ENCODE measurements at regions of chr1 and their contacts with region 1.

Region 1: GRCh38 chr1:234978397-234979295 is 150.0 kb downstream of the TOMM20 start:
- H3K4me3 Mint-ChIP-seq: peak overlapping the region; percentile 87
- H3K27ac Mint-ChIP-seq: peak overlapping the region; percentile 98
- H3K4me1 Mint-ChIP-seq: peaks cover 89% of the 10 kb centered on the region
- H3K27me3 Mint-ChIP-seq: no peaks in the 10 kb centered on the region

Region 2: GRCh38 chr1:234610348-234611152 is 368.1 kb before region 1 on chr1:
- intact Hi-C with region 1: loop called (anchors 1 kb)
- H3K4me3 Mint-ChIP-seq: peak overlapping the region; percentile 76
- H3K27ac Mint-ChIP-seq: peak overlapping the region; percentile 100
- H3K4me1 Mint-ChIP-seq: peaks cover 38% of the 10 kb centered on the region
- H3K27me3 Mint-ChIP-seq: no peaks in the 10 kb centered on the region

Region 3: DNA sequence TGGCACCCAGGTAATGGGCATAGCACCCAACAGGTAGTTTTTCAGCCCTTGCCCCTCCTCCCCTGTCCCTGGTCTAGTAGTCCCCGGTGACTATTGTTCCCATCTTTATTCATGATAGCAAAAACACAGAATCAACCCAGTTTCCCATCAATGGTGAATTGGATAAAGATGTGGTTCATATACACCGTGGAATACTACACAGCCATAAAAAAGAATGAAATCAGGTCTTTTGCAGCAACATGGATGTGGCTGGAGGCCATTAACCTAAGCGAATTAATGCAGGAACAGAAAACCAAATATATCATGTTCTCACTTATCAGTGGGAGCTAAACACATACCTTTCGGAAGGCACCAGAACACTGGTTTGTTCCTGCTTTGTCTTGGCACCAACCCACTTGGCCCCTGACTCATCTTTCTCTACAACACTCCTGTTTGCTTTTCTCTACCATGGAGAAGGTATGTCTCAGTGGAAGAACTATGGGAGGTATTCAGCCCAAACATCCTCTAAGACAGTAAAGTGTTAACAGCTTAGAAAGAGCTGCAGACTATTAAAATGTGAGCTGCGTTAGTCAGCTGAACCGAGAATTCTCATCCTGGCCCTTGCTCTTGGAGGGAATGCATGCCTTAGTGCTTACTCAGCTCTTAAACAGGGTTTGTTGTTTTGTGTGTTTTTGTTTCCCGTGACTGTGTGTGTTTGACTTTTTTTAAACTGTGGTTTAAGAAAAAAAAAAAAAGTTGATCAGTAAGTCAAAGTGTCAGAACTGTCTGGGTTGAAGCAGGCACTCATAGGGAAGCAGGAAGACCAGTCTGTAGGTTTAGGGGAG is 53.0 kb before region 1 on chr1:
- intact Hi-C with region 1: loop called (anchors 5 kb)
- H3K4me3 Mint-ChIP-seq: peak overlapping the region; percentile 7
- H3K27ac Mint-ChIP-seq: peak overlapping the region; percentile 97
- H3K4me1 Mint-ChIP-seq: peaks cover 89% of the 10 kb centered on the region
- H3K27me3 Mint-ChIP-seq: no peaks in the 10 kb centered on the region

Region 4: GRCh38 chr1:234963180-234963903 is 15.3 kb before region 1 on chr1:
- intact Hi-C with region 1: loop called (anchors 2 kb)
- H3K4me3 Mint-ChIP-seq: peak overlapping the region; percentile 59
- H3K27ac Mint-ChIP-seq: peak overlapping the region; percentile 98
- H3K4me1 Mint-ChIP-seq: peaks cover 83% of the 10 kb centered on the region
- H3K27me3 Mint-ChIP-seq: no peaks in the 10 kb centered on the region

Region 5: GRCh38 chr1:235022981-235023710 is 44.5 kb after region 1 on chr1:
- intact Hi-C with region 1: no loop called
- H3K4me3 Mint-ChIP-seq: no peak overlapping the region
- H3K27ac Mint-ChIP-seq: peak overlapping the region; percentile 24
- H3K4me1 Mint-ChIP-seq: peaks cover 51% of the 10 kb centered on the region
- H3K27me3 Mint-ChIP-seq: no peaks in the 10 kb centered on the region

Measured in dendritic cell treated with granulocyte-macrophage colony-stimulating factor and Interleukin-4, amounts not matched to agents 40 ng/mL and 50 ng/mL, for 4 days (primary cell).